ENCODE measurements at regions of chr7 and their contacts with region 1.

Region 1: DNA sequence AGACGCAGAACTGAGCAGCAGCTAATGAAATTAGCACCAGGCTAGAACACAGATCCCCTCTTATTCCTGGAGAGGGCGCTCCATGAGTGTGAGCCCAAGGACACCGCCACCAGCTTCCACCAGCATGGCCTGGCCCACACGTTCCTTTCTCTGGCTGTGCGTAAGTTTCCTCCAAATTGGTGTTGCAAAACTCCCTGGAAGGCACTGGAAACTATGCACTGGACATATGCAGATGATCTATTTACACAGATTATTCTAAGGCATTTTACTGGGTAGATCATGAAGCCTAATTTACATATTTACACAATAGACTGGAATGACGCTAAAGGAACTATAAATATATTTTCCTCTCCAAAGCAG is 455.6 kb upstream of the FOXK1 start:
- DNase-seq: peak; percentile 31 to 70
- H3K4me3 ChIP-seq: no peak overlapping the region
- H3K27ac ChIP-seq: no peak overlapping the region
- H3K4me1 ChIP-seq: no peaks in the 10 kb centered on the region; a peak in 1 of 7 replicates
- H3K27me3 ChIP-seq: no peaks in the 10 kb centered on the region
- CTCF ChIP-seq: peak; percentile 79 to 90 (median 82)
- EP300 ChIP-seq: no peak
- POLR2A ChIP-seq: no peak
- RAD21 ChIP-seq: peak; percentile 84 to 88

Region 2: GRCh38 chr7:4241791-4242190 is 15.3 kb after region 1 on chr7:
- CTCF ChIA-PET with region 1: interaction called, 26 read pairs
- POLR2A ChIA-PET with region 1: interaction called, 3 read pairs
- DNase-seq: peak in 1 of 2 experiments; percentile 73
- H3K4me3 ChIP-seq: no peak overlapping the region
- H3K27ac ChIP-seq: no peak overlapping the region
- H3K4me1 ChIP-seq: peaks cover 4 to 17% (median 13%) of the 10 kb centered on the region in 4 experiments
- H3K27me3 ChIP-seq: no peaks in the 10 kb centered on the region
- CTCF ChIP-seq: peak; percentile 69 to 80 (median 74)
- EP300 ChIP-seq: no peak
- POLR2A ChIP-seq: no peak
- RAD21 ChIP-seq: peak; percentile 46 to 63

Region 3: GRCh38 chr7:4260867-4261600 is 34.5 kb after region 1 on chr7:
- CTCF ChIA-PET with region 1: interaction called, 14 read pairs
- POLR2A ChIA-PET with region 1: no interaction called
- DNase-seq: no peak
- H3K4me3 ChIP-seq: no peak overlapping the region
- H3K27ac ChIP-seq: no peak overlapping the region; the same call in 1 of the 2 replicates
- H3K4me1 ChIP-seq: no peaks in the 10 kb centered on the region; a peak in 1 of 7 replicates
- H3K27me3 ChIP-seq: no peaks in the 10 kb centered on the region
- CTCF ChIP-seq: no peak
- EP300 ChIP-seq: no peak
- POLR2A ChIP-seq: no peak
- RAD21 ChIP-seq: no peak

Region 4: GRCh38 chr7:4361757-4362156 is 135.3 kb after region 1 on chr7:
- CTCF ChIA-PET with region 1: no interaction called
- POLR2A ChIA-PET with region 1: no interaction called
- DNase-seq: no peak
- H3K4me3 ChIP-seq: no peak overlapping the region
- H3K27ac ChIP-seq: no peak overlapping the region
- H3K4me1 ChIP-seq: no peaks in the 10 kb centered on the region
- H3K27me3 ChIP-seq: no peaks in the 10 kb centered on the region
- CTCF ChIP-seq: peak in 2 of 3 experiments; percentile 19 to 38; a peak in 3 of 4 replicates
- EP300 ChIP-seq: no peak
- POLR2A ChIP-seq: no peak
- RAD21 ChIP-seq: peak in 1 of 2 experiments; percentile 26; a peak in 1 of 4 replicates

Region 5: GRCh38 chr7:4472728-4473127 is 246.2 kb after region 1 on chr7:
- CTCF ChIA-PET with region 1: interaction called, 10 read pairs
- POLR2A ChIA-PET with region 1: no interaction called
- DNase-seq: peak in 1 of 2 experiments; percentile 44
- H3K4me3 ChIP-seq: no peak overlapping the region
- H3K27ac ChIP-seq: no peak overlapping the region
- H3K4me1 ChIP-seq: peaks cover 0 to 6% (median 0%) of the 10 kb centered on the region in 4 experiments; a peak in 2 of 7 replicates
- H3K27me3 ChIP-seq: no peaks in the 10 kb centered on the region
- CTCF ChIP-seq: peak in 2 of 3 experiments; percentile 23 to 24; a peak in 2 of 4 replicates
- EP300 ChIP-seq: no peak
- POLR2A ChIP-seq: no peak
- RAD21 ChIP-seq: peak; percentile 34 to 55

Measured in H1 (cell line).